Activated T-helper 1 cell treated with anti-CD3 and anti-CD28 coated beads, Interleukin-12 subunit alpha, Interleukin-12 subunit beta, Interleukin-2, Interleukin-4 antibody, amounts not matched to agents 30 ng/mL and 10 ng/mL and 1 ng/mL, durations not matched to agents 14 hours and 24 hours and 36 hours (primary cell): ENCODE measurements at regions of chr1 and their contacts with region 1.

Region 1: GRCh38 chr1:150696590-150697524 is at the start of gene GOLPH3L:
- DNase-seq: peak; percentile 89
- H3K4me3 Mint-ChIP-seq: peak within 1 kb of the TSS; percentile 91
- H3K27ac Mint-ChIP-seq: peak within 1 kb of the TSS; percentile 85
- H3K4me1 Mint-ChIP-seq: peaks cover 33% of the 10 kb centered on the region
- H3K27me3 Mint-ChIP-seq: peaks cover 12% of the 10 kb centered on the region
- total RNA-seq, gene GOLPH3L: 19.1 and 20.5 TPM in 2 replicates

Region 2: DNA sequence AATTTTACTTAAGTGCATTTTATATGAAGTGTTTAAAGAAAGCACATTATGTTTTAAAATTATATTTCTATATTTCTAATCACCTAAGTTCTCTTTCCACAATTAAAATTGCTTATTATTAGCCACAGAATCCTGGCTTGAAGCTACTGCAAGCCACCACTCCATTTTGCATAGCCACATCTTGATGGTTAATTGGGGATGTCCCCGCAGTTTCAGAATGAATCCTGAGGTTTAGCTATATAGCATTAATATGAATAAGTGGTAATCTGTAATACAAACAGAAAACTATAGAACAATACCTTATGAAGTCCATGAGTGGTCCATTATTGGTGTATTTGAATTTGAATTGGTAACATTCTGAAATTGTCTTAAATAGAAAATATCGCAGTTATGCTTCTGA is 11.7 kb after region 1 on chr1:
- intact Hi-C with region 1: loop called (anchors 1 kb)
- DNase-seq: no peak
- H3K4me3 Mint-ChIP-seq: no peak overlapping the region
- H3K27ac Mint-ChIP-seq: no peak overlapping the region
- H3K4me1 Mint-ChIP-seq: peaks cover 5% of the 10 kb centered on the region
- H3K27me3 Mint-ChIP-seq: peaks cover 21% of the 10 kb centered on the region

Region 3: GRCh38 chr1:150765296-150765976 is 68.6 kb after region 1 on chr1 and contains the start of gene CTSS:
- intact Hi-C with region 1: loop called (anchors 1 kb)
- DNase-seq: no peak
- H3K4me3 Mint-ChIP-seq: peak within 1 kb of the TSS; percentile 92
- H3K27ac Mint-ChIP-seq: peak within 1 kb of the TSS; percentile 94
- H3K4me1 Mint-ChIP-seq: peaks cover 40% of the 10 kb centered on the region
- H3K27me3 Mint-ChIP-seq: peaks cover 13% of the 10 kb centered on the region
- total RNA-seq, gene CTSS: 31.7 and 34.2 TPM in 2 replicates